ENCODE measurements at regions of chr2 and their contacts with region 1.

Region 1: GRCh38 chr2:134411828-134412638 is 158.2 kb downstream of the MGAT5 start:
- DNase-seq: peak; percentile 100
- ATAC-seq: peak; percentile 94
- H3K4me3 ChIP-seq: peak overlapping the region; percentile 68 to 74 (median 69)
- H3K27ac ChIP-seq: peak overlapping the region; percentile 89
- H3K4me1 ChIP-seq: peaks cover 51% of the 10 kb centered on the region
- H3K27me3 ChIP-seq: no peaks in the 10 kb centered on the region
- CTCF ChIP-seq: peak; percentile 99
- EP300 ChIP-seq: peak; percentile 88 to 99
- POLR2A ChIP-seq: peak in 1 of 2 experiments; percentile 77; a peak in 2 of 4 replicates
- RAD21 ChIP-seq: peak; percentile 94

Region 2: GRCh38 chr2:133718688-133719201 is 693.3 kb before region 1 on chr2:
- CTCF ChIA-PET with region 1: no interaction called
- POLR2A ChIA-PET with region 1: no interaction called
- in situ Hi-C with region 1: no loop called
- intact Hi-C with region 1: no loop called
- DNase-seq: no peak
- ATAC-seq: no peak
- H3K4me3 ChIP-seq: no peak overlapping the region
- H3K27ac ChIP-seq: no peak overlapping the region
- H3K4me1 ChIP-seq: no peaks in the 10 kb centered on the region
- H3K27me3 ChIP-seq: no peaks in the 10 kb centered on the region
- CTCF ChIP-seq: no peak
- EP300 ChIP-seq: no peak
- POLR2A ChIP-seq: no peak
- RAD21 ChIP-seq: no peak

Region 3: GRCh38 chr2:134118279-134119116 is 293.5 kb before region 1 on chr2:
- CTCF ChIA-PET with region 1: interaction called, 7 read pairs
- POLR2A ChIA-PET with region 1: interaction called, 48 read pairs
- in situ Hi-C with region 1: loop called (anchors 5 kb)
- intact Hi-C with region 1: loop called (anchors 1 kb)
- DNase-seq: peak; percentile 92
- ATAC-seq: peak; percentile 47
- H3K4me3 ChIP-seq: peak overlapping the region; percentile 80 to 90 (median 83)
- H3K27ac ChIP-seq: no peak overlapping the region
- H3K4me1 ChIP-seq: peaks cover 44% of the 10 kb centered on the region
- H3K27me3 ChIP-seq: no peaks in the 10 kb centered on the region
- CTCF ChIP-seq: peak; percentile 93
- EP300 ChIP-seq: 0 out of 4 replicates have a peak, but pooled peaks of 1 of the 2 experiments have one; percentile 9
- POLR2A ChIP-seq: no peak
- RAD21 ChIP-seq: peak; percentile 94

Region 4: GRCh38 chr2:134228493-134228903 is 183.5 kb before region 1 on chr2:
- CTCF ChIA-PET with region 1: no interaction called
- POLR2A ChIA-PET with region 1: no interaction called
- in situ Hi-C with region 1: no loop called
- intact Hi-C with region 1: loop called (anchors 5 kb)
- DNase-seq: peak; percentile 72
- ATAC-seq: peak; percentile 87
- H3K4me3 ChIP-seq: no peak overlapping the region
- H3K27ac ChIP-seq: no peak overlapping the region
- H3K4me1 ChIP-seq: 0 out of 2 replicates have a peak, but pooled peaks cover 4% of the 10 kb centered on the region
- H3K27me3 ChIP-seq: no peaks in the 10 kb centered on the region
- CTCF ChIP-seq: peak; percentile 77
- EP300 ChIP-seq: no peak
- POLR2A ChIP-seq: no peak
- RAD21 ChIP-seq: peak; percentile 55

Region 5: DNA sequence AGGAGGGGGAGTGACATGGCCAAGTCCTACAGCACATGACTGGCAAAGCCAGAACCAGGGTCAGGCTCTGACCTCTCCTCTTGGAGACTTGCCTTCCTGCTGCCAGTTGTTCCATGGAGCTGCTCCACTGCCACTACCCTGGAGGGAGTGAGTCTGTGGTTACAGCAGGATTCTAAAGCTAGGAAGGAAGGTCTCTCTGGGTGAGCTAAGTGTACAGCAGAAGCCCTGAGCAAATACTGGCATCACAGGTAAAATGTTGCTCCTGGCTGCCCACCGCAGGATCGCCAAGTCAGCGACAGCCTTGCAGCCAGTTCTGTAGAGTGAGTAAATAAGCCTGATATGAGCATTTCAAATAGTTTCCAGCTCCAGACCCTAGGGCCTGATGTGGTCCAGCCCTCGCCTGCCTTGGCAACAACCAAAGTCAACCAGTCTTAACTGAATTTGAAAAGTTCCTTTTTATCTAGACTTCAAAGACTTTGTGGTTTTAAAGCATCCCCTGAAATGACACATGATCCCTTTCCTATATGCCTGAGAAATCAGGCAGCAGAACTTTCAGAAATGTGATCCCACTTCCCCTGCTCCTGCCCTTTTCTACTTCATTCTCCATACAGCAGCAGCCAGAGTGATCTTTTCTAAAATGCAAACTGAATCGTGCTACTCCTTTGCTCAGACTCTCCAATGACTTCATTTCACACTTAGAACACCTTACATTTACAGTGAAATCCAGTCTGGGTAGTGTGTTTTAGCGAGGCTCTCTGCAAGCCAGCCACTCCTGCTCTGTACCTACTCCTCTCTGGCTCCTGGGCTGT is 43.8 kb before region 1 on chr2:
- CTCF ChIA-PET with region 1: no interaction called
- POLR2A ChIA-PET with region 1: interaction called, 3 read pairs
- in situ Hi-C with region 1: no loop called
- intact Hi-C with region 1: loop called (anchors 2 kb)
- DNase-seq: peak; percentile 69
- ATAC-seq: peak; percentile 33; the same call in 2 of the 3 replicates
- H3K4me3 ChIP-seq: no peak overlapping the region
- H3K27ac ChIP-seq: no peak overlapping the region
- H3K4me1 ChIP-seq: peaks cover 15% of the 10 kb centered on the region
- H3K27me3 ChIP-seq: no peaks in the 10 kb centered on the region
- CTCF ChIP-seq: no peak
- EP300 ChIP-seq: no peak
- POLR2A ChIP-seq: no peak
- RAD21 ChIP-seq: no peak

Region 6: GRCh38 chr2:134391751-134392160 is 20.3 kb before region 1 on chr2:
- CTCF ChIA-PET with region 1: interaction called, 8 read pairs
- POLR2A ChIA-PET with region 1: interaction called, 24 read pairs
- in situ Hi-C with region 1: no loop called
- intact Hi-C with region 1: loop called (anchors 1 kb)
- DNase-seq: no peak
- ATAC-seq: no peak
- H3K4me3 ChIP-seq: no peak overlapping the region
- H3K27ac ChIP-seq: no peak overlapping the region
- H3K4me1 ChIP-seq: peaks cover 13% of the 10 kb centered on the region
- H3K27me3 ChIP-seq: no peaks in the 10 kb centered on the region
- CTCF ChIP-seq: no peak
- EP300 ChIP-seq: no peak
- POLR2A ChIP-seq: no peak
- RAD21 ChIP-seq: no peak

Region 7: GRCh38 chr2:134431838-134432434 is 19.9 kb after region 1 on chr2:
- CTCF ChIA-PET with region 1: no interaction called
- POLR2A ChIA-PET with region 1: interaction called, 124 read pairs
- in situ Hi-C with region 1: no loop called
- intact Hi-C with region 1: loop called (anchors 1 kb)
- DNase-seq: no peak
- ATAC-seq: peak; percentile 11
- H3K4me3 ChIP-seq: no peak overlapping the region; a peak in 1 of 6 replicates
- H3K27ac ChIP-seq: peak overlapping the region; percentile 56
- H3K4me1 ChIP-seq: peaks cover 65% of the 10 kb centered on the region
- H3K27me3 ChIP-seq: no peaks in the 10 kb centered on the region
- CTCF ChIP-seq: no peak
- EP300 ChIP-seq: no peak
- POLR2A ChIP-seq: no peak
- RAD21 ChIP-seq: no peak

Region 8: DNA sequence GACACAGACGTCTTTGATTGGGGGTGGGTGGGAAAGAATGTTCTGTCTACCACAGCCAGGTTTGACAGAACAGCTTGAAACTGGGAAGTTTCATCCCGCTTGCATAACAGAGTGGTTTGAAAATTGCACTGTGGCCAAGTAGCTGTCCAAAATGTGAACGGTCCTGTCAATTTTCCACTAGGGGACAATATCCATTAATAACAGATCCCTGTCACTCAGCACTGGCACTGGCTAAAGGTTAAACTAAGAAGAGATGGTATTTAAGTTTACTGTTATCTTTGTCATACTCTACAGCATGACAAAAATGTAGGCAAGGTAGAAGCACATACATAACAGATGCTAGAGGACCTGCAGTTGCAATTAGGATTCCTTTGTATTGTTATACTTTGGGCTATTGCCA is 370.8 kb after region 1 on chr2:
- CTCF ChIA-PET with region 1: no interaction called
- POLR2A ChIA-PET with region 1: no interaction called
- in situ Hi-C with region 1: no loop called
- intact Hi-C with region 1: no loop called
- DNase-seq: peak; percentile 73
- ATAC-seq: peak; percentile 95
- H3K4me3 ChIP-seq: no peak overlapping the region
- H3K27ac ChIP-seq: no peak overlapping the region
- H3K4me1 ChIP-seq: no peaks in the 10 kb centered on the region
- H3K27me3 ChIP-seq: no peaks in the 10 kb centered on the region
- CTCF ChIP-seq: peak; percentile 83
- EP300 ChIP-seq: no peak
- POLR2A ChIP-seq: no peak
- RAD21 ChIP-seq: peak; percentile 58

Region 9: GRCh38 chr2:134918526-134919340 is 506.7 kb after region 1 on chr2 and contains the start of gene CCNT2:
- CTCF ChIA-PET with region 1: no interaction called
- POLR2A ChIA-PET with region 1: interaction called, 6 read pairs
- in situ Hi-C with region 1: no loop called
- intact Hi-C with region 1: loop called (anchors 5 kb)
- DNase-seq: peak; percentile 99
- ATAC-seq: peak; percentile 88
- H3K4me3 ChIP-seq: peak within 1 kb of the TSS; percentile 77 to 100 (median 96)
- H3K27ac ChIP-seq: peak within 1 kb of the TSS; percentile 99
- H3K4me1 ChIP-seq: peaks cover 41% of the 10 kb centered on the region
- H3K27me3 ChIP-seq: no peaks in the 10 kb centered on the region; a peak in 1 of 5 replicates
- CTCF ChIP-seq: 0 out of 2 replicates have a peak, but pooled peaks have one; percentile 17
- EP300 ChIP-seq: peak in 1 of 2 experiments; percentile 3; a peak in 2 of 4 replicates
- POLR2A ChIP-seq: peak; percentile 84 to 87
- RAD21 ChIP-seq: peak; percentile 39; the same call in 1 of the 2 replicates
- total RNA-seq, gene CCNT2: 31.2 and 34.4 TPM in 2 replicates